ENCODE measurements at regions of chr18 and their contacts with region 1.

Region 1: DNA sequence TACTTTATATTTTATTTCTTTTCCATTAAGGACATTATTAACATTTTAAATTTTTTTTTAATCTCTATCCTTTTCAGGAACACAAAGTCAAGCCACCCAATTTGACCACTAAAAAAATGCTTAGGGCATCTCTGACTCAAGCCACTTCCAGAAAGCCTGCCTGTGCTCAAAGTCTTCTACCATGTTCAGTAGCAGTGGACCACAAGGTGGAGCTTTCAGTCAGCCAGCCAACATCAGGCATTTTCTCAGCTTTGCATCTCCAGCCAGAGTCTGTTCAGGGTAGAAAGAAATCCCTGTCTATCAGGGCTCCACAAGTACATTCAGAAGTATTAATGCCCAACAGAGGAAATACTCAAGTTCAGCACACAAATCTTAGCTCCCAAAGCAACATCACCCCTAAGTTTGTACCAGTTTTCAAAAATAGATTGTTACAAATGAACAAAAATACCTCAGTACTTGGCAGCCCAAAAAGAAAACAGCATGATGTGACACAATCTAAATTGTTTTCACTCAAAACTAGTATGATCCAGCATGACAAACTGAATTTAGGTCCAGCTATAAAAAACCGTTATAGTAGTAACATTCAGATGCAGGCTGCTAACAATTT is 37.6 kb downstream of the C18orf63 start:
- DNase-seq: peak; percentile 43
- ATAC-seq: peak; percentile 96

Region 2: DNA sequence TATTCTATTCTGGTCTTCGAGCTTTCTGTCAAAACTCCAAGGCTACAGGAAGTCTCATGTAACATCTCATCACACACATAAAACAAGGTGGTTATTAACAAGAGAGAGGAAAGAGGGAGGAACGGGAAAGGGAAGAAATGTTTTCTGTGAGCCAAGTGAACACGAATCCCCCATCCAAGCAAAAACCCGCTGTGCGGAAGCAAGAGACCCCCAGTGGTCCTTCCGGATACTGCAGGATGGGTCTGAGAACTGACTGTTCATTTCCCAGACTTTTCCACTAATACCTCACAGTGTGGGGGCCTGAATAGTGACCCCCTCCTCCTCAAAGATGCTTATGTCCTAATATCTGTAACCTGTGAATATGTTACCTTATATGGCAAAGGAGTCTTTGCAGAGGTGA is 122.9 kb after region 1 on chr18:
- intact Hi-C with region 1: loop called (anchors 5 kb)
- DNase-seq: no peak
- ATAC-seq: peak; percentile 63

Region 3: DNA sequence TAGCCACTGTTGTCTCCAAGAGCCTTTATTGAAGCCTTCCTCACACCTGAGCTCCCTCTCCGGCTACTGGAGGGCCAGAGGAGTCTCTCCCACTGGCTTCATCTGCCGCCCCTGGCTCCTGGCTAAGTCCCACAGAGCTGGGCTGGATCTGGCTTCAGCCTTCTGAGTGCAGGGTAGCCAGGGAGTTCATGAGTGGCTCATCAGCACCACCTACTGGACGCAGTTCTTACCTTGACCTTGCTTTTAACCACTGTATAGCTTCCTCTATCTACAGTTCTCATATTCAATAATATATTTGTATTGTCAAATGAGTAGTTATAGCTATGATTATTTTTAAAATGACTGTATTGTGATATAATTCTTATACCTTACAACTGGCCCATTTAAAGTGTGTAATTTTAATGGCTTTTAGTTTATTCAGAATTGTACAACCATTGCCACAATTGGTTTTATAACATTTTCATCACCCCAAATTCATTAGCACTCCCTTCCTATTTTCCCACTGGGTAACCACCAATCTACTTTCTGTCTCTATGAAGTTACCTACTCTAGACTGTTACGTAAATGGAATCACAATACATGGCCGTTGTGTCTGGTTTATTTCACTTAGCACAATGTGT is 198.8 kb after region 1 on chr18:
- intact Hi-C with region 1: loop called (anchors 2 kb)
- DNase-seq: peak; percentile 79
- ATAC-seq: peak; percentile 98

Measured in Right ventricle myocardium superior (tissue), 1 donor.